Activated naive CD4-positive, alpha-beta T cell treated with anti-CD3 and anti-CD28 coated beads for 36 hours (primary cell): ENCODE measurements at regions of chr4 and their contacts with region 1.

Region 1: DNA sequence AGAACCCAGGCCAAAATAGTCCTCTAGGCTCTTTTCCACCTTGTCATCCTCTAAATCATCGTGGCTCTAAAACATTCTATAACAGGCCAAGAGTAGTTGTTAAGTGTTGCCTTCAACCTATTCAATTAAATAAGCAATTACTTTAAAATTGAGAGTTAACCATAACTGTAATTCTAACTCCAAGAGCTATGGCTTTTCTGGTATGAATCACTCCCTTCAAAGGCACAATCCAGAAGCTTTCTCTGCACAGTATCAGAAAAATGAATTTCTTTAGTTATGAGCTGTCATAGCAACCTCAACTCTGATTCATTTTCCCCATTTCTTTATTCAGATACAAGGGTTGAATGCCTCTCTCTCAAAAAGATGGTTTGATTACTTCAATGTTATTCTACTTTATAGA is 21.7 kb downstream of the INPP4B start:
- DNase-seq: no peak
- H3K4me3 Mint-ChIP-seq: peak overlapping the region; percentile 5
- H3K27ac Mint-ChIP-seq: peak overlapping the region; percentile 86
- H3K4me1 Mint-ChIP-seq: peaks cover 18% of the 10 kb centered on the region
- H3K27me3 Mint-ChIP-seq: no peaks in the 10 kb centered on the region

Region 2: GRCh38 chr4:141636082-141636770 is 1188.1 kb before region 1 on chr4 and contains the start of gene IL15:
- CTCF ChIA-PET with region 1: no interaction called
- intact Hi-C with region 1: loop called (anchors 2 kb)
- DNase-seq: peak; percentile 86
- H3K4me3 Mint-ChIP-seq: peak within 1 kb of the TSS; percentile 89
- H3K27ac Mint-ChIP-seq: no peak within 1 kb of the TSS
- H3K4me1 Mint-ChIP-seq: peaks cover 10% of the 10 kb centered on the region
- H3K27me3 Mint-ChIP-seq: peaks cover 9% of the 10 kb centered on the region
- total RNA-seq, gene IL15: 0.19 to 0.52 TPM

Region 3: GRCh38 chr4:142282870-142283431 is 541.4 kb before region 1 on chr4:
- CTCF ChIA-PET with region 1: no interaction called
- intact Hi-C with region 1: loop called (anchors 5 kb)
- DNase-seq: peak; percentile 60
- H3K4me3 Mint-ChIP-seq: no peak overlapping the region
- H3K27ac Mint-ChIP-seq: no peak overlapping the region
- H3K4me1 Mint-ChIP-seq: peaks cover 29% of the 10 kb centered on the region
- H3K27me3 Mint-ChIP-seq: no peaks in the 10 kb centered on the region

Region 4: GRCh38 chr4:142558851-142559250 is 265.5 kb before region 1 on chr4:
- CTCF ChIA-PET with region 1: no interaction called
- intact Hi-C with region 1: loop called (anchors 2 kb)
- DNase-seq: no peak
- H3K4me3 Mint-ChIP-seq: peak overlapping the region; percentile 49
- H3K27ac Mint-ChIP-seq: peak overlapping the region; percentile 84
- H3K4me1 Mint-ChIP-seq: peaks cover 77% of the 10 kb centered on the region
- H3K27me3 Mint-ChIP-seq: no peaks in the 10 kb centered on the region

Region 5: DNA sequence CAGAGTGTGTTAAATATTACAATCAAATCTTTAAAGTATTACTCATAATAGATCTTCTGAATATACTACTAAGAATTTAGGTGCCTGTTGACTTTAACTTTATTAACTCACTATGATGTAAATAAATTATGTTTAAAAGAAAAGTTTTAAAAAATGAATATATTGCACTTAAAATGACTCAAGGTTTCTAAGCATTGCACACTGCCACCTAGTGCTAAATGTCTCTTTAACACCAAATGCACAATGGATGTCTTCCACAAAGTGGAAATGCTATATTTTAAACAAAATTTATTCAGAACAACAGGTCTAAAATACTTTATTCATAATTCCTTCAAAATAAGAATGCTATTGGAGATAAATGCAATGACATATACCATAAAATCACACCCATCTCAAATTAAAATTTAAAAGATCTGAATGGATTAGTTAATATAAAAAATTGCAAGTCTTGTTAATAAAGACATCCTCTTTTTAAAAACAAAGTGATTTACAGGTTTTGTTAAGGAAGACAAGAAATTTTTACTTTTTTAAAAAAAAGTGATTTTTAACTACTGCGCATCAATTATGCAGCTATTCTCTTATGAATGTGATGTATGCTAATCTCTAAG is 16.3 kb after region 1 on chr4:
- CTCF ChIA-PET with region 1: interaction called, 4 read pairs
- intact Hi-C with region 1: loop called (anchors 1 kb)
- DNase-seq: no peak
- H3K4me3 Mint-ChIP-seq: no peak overlapping the region
- H3K27ac Mint-ChIP-seq: no peak overlapping the region
- H3K4me1 Mint-ChIP-seq: peaks cover 31% of the 10 kb centered on the region
- H3K27me3 Mint-ChIP-seq: no peaks in the 10 kb centered on the region